PC-9 (cell line): ENCODE measurements at regions of chr7 and their contacts with region 1.

Region 1: DNA sequence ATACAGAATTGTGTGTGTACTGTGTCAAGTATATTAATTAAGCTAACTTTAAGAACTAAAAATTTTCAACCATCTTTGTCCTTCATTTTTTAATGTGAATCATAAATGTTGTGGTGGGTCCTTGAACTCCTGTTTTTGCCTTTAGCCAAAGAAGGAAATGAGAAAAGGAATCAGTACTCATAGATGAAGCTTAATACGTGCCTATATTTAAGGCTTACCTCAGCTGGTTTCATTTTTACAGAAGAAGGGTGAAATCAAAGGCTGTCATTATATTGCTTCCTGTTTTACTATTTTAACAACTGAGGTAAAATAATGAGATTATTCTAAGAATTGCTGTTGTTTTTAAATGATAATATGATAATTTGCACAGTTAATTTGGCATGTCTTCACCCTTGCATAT is 6.3 kb upstream of the SNX13 start:
- DNase-seq: peak in 1 of 2 experiments; percentile 5
- H3K4me3 ChIP-seq: no peak overlapping the region
- H3K27ac ChIP-seq: no peak overlapping the region
- H3K4me1 ChIP-seq: peaks cover 44% of the 10 kb centered on the region
- H3K27me3 ChIP-seq: no peaks in the 10 kb centered on the region
- CTCF ChIP-seq: no peak

Region 2: GRCh38 chr7:18020138-18020715 is 73.6 kb after region 1 on chr7:
- CTCF ChIA-PET with region 1: no interaction called
- POLR2A ChIA-PET with region 1: interaction called, 10 read pairs
- intact Hi-C with region 1: no loop called
- DNase-seq: no peak
- H3K4me3 ChIP-seq: no peak overlapping the region; the same call in 1 of the 2 replicates
- H3K27ac ChIP-seq: peak overlapping the region; percentile 64
- H3K4me1 ChIP-seq: peaks cover 20% of the 10 kb centered on the region
- H3K27me3 ChIP-seq: no peaks in the 10 kb centered on the region
- CTCF ChIP-seq: no peak